ENCODE measurements at regions of chr9 and their contacts with region 1.

Region 1: DNA sequence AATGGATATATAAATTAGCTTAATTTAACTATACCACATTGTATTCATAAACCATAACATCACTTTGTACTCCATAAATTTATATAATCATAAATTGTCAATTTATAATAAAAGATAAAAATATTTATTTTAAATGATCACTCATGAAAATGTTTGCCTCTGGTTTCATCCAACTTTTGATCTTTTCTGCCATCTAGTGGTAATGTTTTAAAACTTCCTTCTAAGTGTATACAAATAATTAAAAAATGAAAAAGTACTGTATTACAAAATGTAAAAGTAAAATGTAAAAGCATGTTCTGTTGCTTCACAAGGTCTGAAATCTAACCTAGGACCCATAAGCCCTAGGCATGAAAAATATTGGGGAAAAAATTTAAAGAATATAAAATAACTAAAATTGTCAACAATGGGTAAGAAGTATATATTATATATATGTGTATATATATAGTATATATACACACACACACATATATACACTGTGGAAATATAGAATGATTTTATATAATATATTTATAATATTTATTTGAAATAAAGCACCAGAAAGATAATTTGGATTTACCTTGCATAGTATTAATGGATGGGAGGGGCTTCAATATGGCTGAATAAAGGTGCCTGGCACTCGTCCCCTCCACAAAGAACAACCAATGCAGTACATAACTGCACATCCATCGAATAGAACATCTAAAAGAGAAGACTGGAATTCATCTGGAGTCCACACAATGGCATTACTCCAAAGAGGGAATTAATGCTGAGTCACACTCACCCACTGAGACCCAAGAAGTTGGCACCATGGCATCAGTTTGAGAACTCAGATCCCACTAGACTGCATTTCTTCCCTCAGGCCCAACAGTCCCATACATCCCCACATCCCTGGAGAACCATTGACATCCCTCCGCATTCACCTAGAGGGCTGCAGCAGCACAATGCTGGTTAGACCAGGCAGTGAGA is 32.5 kb downstream of the ANXA1 start:
- DNase-seq: no peak
- H3K4me3 Mint-ChIP-seq: no peak overlapping the region
- H3K27ac Mint-ChIP-seq: no peak overlapping the region
- H3K4me1 Mint-ChIP-seq: peaks cover 6% of the 10 kb centered on the region
- H3K27me3 Mint-ChIP-seq: peaks cover 2% of the 10 kb centered on the region

Region 2: GRCh38 chr9:72807765-72808445 is 376.3 kb before region 1 on chr9:
- CTCF ChIA-PET with region 1: no interaction called
- intact Hi-C with region 1: no loop called
- DNase-seq: no peak
- H3K4me3 Mint-ChIP-seq: no peak overlapping the region
- H3K27ac Mint-ChIP-seq: no peak overlapping the region
- H3K4me1 Mint-ChIP-seq: no peaks in the 10 kb centered on the region
- H3K27me3 Mint-ChIP-seq: no peaks in the 10 kb centered on the region

Region 3: GRCh38 chr9:72856972-72857623 is 327.1 kb before region 1 on chr9:
- CTCF ChIA-PET with region 1: no interaction called
- intact Hi-C with region 1: loop called (anchors 1 kb)
- DNase-seq: peak; percentile 26
- H3K4me3 Mint-ChIP-seq: no peak overlapping the region
- H3K27ac Mint-ChIP-seq: no peak overlapping the region
- H3K4me1 Mint-ChIP-seq: no peaks in the 10 kb centered on the region
- H3K27me3 Mint-ChIP-seq: no peaks in the 10 kb centered on the region

Region 4: GRCh38 chr9:72871685-72872084 is 312.5 kb before region 1 on chr9:
- CTCF ChIA-PET with region 1: no interaction called
- intact Hi-C with region 1: loop called (anchors 1 kb)
- DNase-seq: no peak
- H3K4me3 Mint-ChIP-seq: no peak overlapping the region
- H3K27ac Mint-ChIP-seq: no peak overlapping the region
- H3K4me1 Mint-ChIP-seq: no peaks in the 10 kb centered on the region
- H3K27me3 Mint-ChIP-seq: peaks cover 3% of the 10 kb centered on the region

Region 5: GRCh38 chr9:73081979-73082657 is 102.1 kb before region 1 on chr9:
- CTCF ChIA-PET with region 1: interaction called, 15 read pairs
- intact Hi-C with region 1: no loop called
- DNase-seq: no peak
- H3K4me3 Mint-ChIP-seq: no peak overlapping the region
- H3K27ac Mint-ChIP-seq: no peak overlapping the region
- H3K4me1 Mint-ChIP-seq: no peaks in the 10 kb centered on the region
- H3K27me3 Mint-ChIP-seq: peaks cover 6% of the 10 kb centered on the region

Region 6: DNA sequence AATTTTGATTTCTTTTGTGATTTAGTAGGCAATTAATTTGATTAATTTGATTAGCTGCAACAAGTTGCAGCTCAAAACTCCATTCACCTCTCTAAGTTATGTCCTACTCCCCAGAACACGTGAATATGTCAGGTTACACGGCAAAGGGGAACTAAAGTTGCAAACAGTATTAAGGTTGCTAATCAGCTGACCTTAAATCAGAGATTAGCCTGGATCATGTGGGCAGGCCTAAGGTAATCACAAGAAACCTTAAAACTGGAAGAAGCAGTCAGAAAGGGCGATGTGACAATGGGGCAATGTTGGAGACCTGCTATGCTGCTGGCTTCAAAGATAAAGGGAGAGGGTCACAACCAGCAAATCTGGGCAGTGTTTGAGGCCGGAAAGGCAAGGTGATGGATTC is 79.8 kb before region 1 on chr9:
- CTCF ChIA-PET with region 1: interaction called, 167 read pairs
- intact Hi-C with region 1: loop called (anchors 1 kb)
- DNase-seq: no peak
- H3K4me3 Mint-ChIP-seq: no peak overlapping the region
- H3K27ac Mint-ChIP-seq: no peak overlapping the region
- H3K4me1 Mint-ChIP-seq: no peaks in the 10 kb centered on the region
- H3K27me3 Mint-ChIP-seq: peaks cover 2% of the 10 kb centered on the region

Measured in activated naive CD4-positive, alpha-beta T cell treated with anti-CD3 and anti-CD28 coated beads for 36 hours (primary cell).